ENCODE measurements at regions of chr1 and their contacts with region 1.

Region 1: GRCh38 chr1:156927215-156928042 is 7.0 kb downstream of the LRRC71 start:
- DNase-seq: peak; percentile 59 to 87 (median 72)
- H3K4me3 ChIP-seq: peak overlapping the region in 1 of 4 donors; percentile 28
- H3K27ac ChIP-seq: no peak overlapping the region
- H3K4me1 ChIP-seq: peaks cover 0 to 12% of the 10 kb centered on the region in 2 donors
- H3K27me3 ChIP-seq: peaks cover 34% of the 10 kb centered on the region
- CTCF ChIP-seq: peak; percentile 22 to 71 (median 56)
- POLR2A ChIP-seq: no peak

Region 2: DNA sequence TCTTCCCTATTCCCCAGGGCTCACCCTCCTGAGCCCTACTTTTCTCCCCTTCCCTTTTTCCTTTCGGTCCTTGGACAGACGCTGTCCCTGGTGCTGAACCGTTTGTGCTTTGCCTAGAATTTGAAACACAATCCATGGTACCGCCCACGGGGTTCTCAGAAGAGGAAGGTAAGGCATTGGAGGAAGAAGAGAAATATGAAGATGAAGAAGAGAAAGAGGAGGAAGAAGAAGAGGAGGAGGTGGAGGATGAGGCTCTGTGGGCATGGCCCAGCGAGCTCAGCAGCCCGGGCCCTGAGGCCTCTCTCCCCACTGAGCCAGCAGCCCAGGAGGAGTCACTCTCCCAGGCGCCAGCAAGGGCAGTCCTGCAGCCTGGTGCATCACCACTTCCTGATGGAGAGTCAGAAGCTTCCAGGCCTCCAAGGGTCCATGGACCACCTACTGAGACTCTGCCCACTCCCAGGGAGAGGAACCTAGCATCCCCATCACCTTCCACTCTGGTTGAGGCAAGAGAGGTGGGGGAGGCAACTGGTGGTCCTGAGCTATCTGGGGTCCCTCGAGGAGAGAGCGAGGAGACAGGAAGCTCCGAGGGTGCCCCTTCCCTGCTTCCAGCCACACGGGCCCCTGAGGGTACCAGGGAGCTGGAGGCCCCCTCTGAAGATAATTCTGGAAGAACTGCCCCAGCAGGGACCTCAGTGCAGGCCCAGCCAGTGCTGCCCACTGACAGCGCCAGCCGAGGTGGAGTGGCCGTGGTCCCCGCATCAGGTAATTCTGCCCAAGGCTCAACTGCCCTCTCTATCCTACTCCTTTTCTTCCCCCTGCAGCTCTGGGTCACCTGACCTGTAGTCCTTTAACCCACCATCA is 275.1 kb before region 1 on chr1:
- intact Hi-C with region 1: no loop called
- DNase-seq: peak in 2 of 7 donors; percentile 35 to 41
- H3K4me3 ChIP-seq: no peak overlapping the region
- H3K27ac ChIP-seq: no peak overlapping the region
- H3K4me1 ChIP-seq: peaks cover 10 to 21% of the 10 kb centered on the region in 2 donors
- H3K27me3 ChIP-seq: no peaks in the 10 kb centered on the region
- CTCF ChIP-seq: no peak
- POLR2A ChIP-seq: no peak

Region 3: DNA sequence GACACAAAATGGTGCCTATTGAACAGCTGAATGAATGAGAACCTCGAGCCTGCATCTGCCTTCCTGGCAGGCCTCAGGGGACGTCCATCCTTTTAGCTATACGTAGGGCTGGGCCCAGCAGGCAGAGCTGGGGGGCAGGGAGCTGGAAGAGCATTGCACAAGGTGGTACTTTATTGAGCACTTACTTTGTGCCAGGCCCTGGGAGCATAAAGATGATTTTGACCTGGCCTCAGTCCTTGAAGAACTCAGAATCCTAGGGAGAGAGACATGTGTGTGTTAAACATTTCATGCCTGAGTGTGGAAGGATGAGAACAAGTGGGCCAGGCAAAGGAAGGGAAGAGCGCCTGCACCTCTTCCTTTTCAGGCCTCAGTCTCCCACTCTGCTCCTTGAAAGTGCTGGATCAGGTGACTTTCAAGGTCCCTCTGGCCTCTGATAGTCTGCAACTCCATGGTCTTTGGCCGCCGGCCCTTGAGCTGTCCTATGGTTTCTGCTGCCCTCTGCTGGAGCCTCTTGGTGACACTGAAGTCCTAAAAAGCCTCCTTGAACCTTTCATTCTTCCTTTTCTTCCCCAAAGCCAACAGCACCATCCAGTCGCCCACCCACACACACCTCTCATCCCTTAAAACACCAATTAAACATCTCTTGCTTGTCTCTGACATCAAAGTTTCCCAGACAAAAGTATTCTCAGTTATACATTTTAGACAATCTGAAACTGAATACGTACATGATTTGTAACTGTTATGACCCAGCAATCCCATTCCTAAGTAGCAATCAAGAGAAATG is 37.4 kb before region 1 on chr1:
- intact Hi-C with region 1: loop called in 1 of 2 experiments (anchors 2 kb)
- DNase-seq: peak; percentile 71 to 95 (median 87)
- H3K4me3 ChIP-seq: no peak overlapping the region
- H3K27ac ChIP-seq: no peak overlapping the region
- H3K4me1 ChIP-seq: peaks cover 0 to 15% of the 10 kb centered on the region in 2 donors
- H3K27me3 ChIP-seq: peaks cover 8% of the 10 kb centered on the region
- CTCF ChIP-seq: peak; percentile 41 to 86 (median 80)
- POLR2A ChIP-seq: no peak

Region 4: DNA sequence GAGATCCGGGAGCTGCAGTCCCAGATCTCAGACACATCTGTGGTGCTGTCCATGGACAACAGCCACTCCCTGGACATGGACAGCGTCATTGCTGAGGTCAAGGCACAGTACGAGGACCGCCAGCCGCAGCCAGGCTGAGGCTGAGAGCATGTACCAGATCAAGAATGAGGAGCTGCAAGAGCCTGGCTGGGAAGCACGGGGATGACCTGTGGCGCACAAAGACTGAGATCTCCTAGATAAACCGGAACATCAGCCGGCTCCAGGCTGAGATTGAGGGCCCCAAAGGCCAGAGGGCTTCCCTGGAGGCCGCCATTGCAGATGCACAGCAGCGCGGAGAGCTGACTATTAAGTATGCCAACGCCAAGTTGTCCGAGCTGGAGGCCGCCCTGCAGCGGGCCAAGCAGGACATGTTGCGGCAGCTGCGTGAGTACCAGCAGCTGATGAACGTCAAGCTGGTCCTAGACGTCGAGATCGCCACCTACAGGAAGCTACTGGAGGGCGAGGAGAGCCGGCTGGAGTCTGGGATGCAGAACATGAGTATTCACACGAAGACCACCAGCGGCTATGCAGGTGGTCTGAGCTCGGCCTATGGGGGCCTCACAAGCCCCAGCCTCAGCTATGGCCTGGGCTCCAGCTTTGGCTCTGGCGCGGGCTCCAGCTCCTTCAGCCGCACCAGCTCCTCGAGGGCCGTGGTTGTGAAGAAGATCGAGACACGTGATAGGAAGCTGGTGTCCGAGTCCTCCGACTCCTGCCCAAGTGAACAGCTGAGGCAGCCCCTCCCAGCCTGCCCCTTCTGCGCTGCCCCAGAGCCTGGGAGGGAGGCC is 146.7 kb after region 1 on chr1:
- intact Hi-C with region 1: loop called in 1 of 2 experiments (anchors 10 kb)
- DNase-seq: peak; percentile 77 to 92 (median 84)
- H3K4me3 ChIP-seq: peak overlapping the region in 1 of 4 donors; percentile 18
- H3K27ac ChIP-seq: no peak overlapping the region
- H3K4me1 ChIP-seq: peaks cover 0 to 8% of the 10 kb centered on the region in 2 donors
- H3K27me3 ChIP-seq: no peaks in the 10 kb centered on the region
- CTCF ChIP-seq: peak; percentile 59 to 83 (median 66)
- POLR2A ChIP-seq: no peak

Measured in adrenal gland (tissue), 19 donors.